Activated B cell treated with CpG ODN at 0.5 μM for 24 hours (primary cell): ENCODE measurements at regions of chrX and their contacts with region 1.

Region 1: GRCh38 chrX:46978341-46979291 is 66.4 kb downstream of the JADE3 start:
- DNase-seq: peak; percentile 54
- ATAC-seq: peak; percentile 86
- H3K4me3 Mint-ChIP-seq: no peak overlapping the region
- H3K27ac Mint-ChIP-seq: peak overlapping the region; percentile 1
- H3K4me1 Mint-ChIP-seq: peaks cover 37% of the 10 kb centered on the region
- H3K27me3 Mint-ChIP-seq: no peaks in the 10 kb centered on the region
- CTCF ChIP-seq: no peak

Region 2: GRCh38 chrX:46961574-46962283 is 16.9 kb before region 1 on chrX:
- CTCF ChIA-PET with region 1: interaction called, 4 read pairs
- POLR2A ChIA-PET with region 1: no interaction called
- intact Hi-C with region 1: loop called (anchors 2 kb)
- DNase-seq: no peak
- ATAC-seq: peak; percentile 26
- H3K4me3 Mint-ChIP-seq: peak overlapping the region; percentile 66
- H3K27ac Mint-ChIP-seq: peak overlapping the region; percentile 90
- H3K4me1 Mint-ChIP-seq: peaks cover 89% of the 10 kb centered on the region
- H3K27me3 Mint-ChIP-seq: no peaks in the 10 kb centered on the region
- CTCF ChIP-seq: no peak

Region 3: GRCh38 chrX:46994096-46994495 is 15.5 kb after region 1 on chrX:
- CTCF ChIA-PET with region 1: no interaction called
- POLR2A ChIA-PET with region 1: no interaction called
- intact Hi-C with region 1: no loop called
- DNase-seq: no peak
- ATAC-seq: no peak
- H3K4me3 Mint-ChIP-seq: no peak overlapping the region
- H3K27ac Mint-ChIP-seq: no peak overlapping the region
- H3K4me1 Mint-ChIP-seq: peaks cover 4% of the 10 kb centered on the region
- H3K27me3 Mint-ChIP-seq: no peaks in the 10 kb centered on the region
- CTCF ChIP-seq: no peak

Region 4: GRCh38 chrX:47030339-47030738 is 51.7 kb after region 1 on chrX:
- CTCF ChIA-PET with region 1: interaction called, 3 read pairs
- POLR2A ChIA-PET with region 1: no interaction called
- intact Hi-C with region 1: loop called (anchors 1 kb)
- DNase-seq: no peak
- ATAC-seq: no peak
- H3K4me3 Mint-ChIP-seq: no peak overlapping the region
- H3K27ac Mint-ChIP-seq: no peak overlapping the region
- H3K4me1 Mint-ChIP-seq: peaks cover 6% of the 10 kb centered on the region
- H3K27me3 Mint-ChIP-seq: no peaks in the 10 kb centered on the region
- CTCF ChIP-seq: no peak